GM10248 (cell line): ENCODE measurements at regions of chr12 and their contacts with region 1.

Region 1: GRCh38 chr12:56014206-56014605 is 6.6 kb upstream of the IKZF4 start:
- DNase-seq: no peak
- CTCF ChIP-seq: no peak

Region 2: DNA sequence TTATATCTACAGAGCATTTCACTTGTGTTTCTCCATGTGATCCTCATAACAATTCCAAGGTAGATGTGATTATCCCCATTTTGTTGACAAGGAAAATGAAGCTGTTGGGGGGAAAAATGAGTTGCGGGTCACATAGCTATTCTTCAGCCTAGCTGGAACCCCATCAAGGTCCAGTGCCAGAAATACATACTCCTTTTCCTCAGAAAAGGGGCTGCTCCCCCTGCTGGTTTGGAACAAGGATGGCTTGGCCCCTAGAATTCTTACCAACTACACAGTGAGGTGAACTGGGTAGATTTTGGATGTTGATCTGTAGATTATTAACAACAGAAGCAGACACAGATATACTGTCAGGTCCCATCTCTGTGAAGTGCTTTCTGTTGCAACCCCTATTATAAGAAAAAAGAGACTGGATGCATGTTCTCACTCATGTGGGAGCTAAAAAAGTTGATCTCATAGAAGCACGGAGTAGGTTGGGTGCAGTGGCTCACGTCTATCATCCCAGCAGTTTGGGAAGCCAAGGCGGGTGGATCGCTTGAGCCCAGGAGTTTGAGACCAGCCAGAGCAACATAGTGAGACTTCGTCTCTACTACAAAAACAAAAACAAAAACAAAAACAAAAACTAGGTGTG is 15.6 kb after region 1 on chr12:
- CTCF ChIA-PET with region 1: interaction called, 18 read pairs
- POLR2A ChIA-PET with region 1: interaction called, 3 read pairs
- DNase-seq: peak; percentile 64
- CTCF ChIP-seq: peak; percentile 68

Region 3: DNA sequence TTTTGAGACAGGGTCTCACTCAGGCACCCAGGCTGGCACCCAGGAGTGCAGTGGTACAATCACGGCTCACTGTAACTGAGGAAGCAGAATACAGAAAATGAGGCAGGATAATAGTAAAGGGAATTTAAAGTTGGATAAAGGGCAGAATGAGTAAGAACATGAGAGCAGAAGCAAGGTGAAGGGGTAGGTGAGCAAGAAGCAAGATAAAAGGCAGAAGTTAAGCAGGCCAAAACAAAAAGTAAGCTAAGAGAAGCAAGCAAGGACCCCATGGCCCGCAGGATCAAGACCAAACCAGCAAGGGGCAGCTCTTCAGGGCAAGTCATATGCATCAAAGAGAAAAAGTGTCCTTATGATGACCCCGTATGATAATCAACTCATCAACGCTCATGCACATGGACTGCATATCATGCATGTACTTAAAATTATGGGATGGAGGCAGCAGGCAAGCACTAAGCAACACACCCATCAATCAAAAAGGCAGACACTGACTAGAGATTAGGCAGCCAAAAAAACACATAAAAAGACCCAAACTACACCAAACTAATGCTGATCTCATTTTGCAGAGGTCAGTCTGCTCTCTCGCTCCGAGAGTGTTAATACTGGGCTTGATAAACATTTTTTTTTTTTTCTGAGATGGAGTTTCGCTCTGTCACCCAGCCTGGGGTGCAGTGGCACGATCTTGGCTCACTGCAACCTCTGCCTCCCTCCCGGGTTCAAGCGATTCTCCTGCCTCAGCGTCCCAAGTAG is 423.4 kb after region 1 on chr12:
- CTCF ChIA-PET with region 1: no interaction called
- POLR2A ChIA-PET with region 1: no interaction called
- DNase-seq: no peak
- CTCF ChIP-seq: no peak